Activated T-helper 1 cell treated with anti-CD3 and anti-CD28 coated beads, Interleukin-12 subunit alpha, Interleukin-12 subunit beta, Interleukin-2, Interleukin-4 antibody, amounts not matched to agents 30 ng/mL and 10 ng/mL and 1 ng/mL, durations not matched to agents 14 hours and 24 hours and 36 hours (primary cell): ENCODE measurements at regions of chr2 and their contacts with region 1.

Region 1: GRCh38 chr2:190627448-190628412 is 21.2 kb upstream of the NAB1 start:
- DNase-seq: no peak
- H3K4me3 Mint-ChIP-seq: peak overlapping the region; percentile 85
- H3K27ac Mint-ChIP-seq: no peak overlapping the region
- H3K4me1 Mint-ChIP-seq: peaks cover 18% of the 10 kb centered on the region
- H3K27me3 Mint-ChIP-seq: peaks cover 12% of the 10 kb centered on the region

Region 2: GRCh38 chr2:190551928-190552327 is 75.8 kb before region 1 on chr2:
- intact Hi-C with region 1: loop called (anchors 5 kb)
- DNase-seq: no peak
- H3K4me3 Mint-ChIP-seq: peak overlapping the region; percentile 62
- H3K27ac Mint-ChIP-seq: no peak overlapping the region
- H3K4me1 Mint-ChIP-seq: peaks cover 24% of the 10 kb centered on the region
- H3K27me3 Mint-ChIP-seq: no peaks in the 10 kb centered on the region